A673 (cell line): ENCODE measurements at regions of chr11 and their contacts with region 1.

Region 1: DNA sequence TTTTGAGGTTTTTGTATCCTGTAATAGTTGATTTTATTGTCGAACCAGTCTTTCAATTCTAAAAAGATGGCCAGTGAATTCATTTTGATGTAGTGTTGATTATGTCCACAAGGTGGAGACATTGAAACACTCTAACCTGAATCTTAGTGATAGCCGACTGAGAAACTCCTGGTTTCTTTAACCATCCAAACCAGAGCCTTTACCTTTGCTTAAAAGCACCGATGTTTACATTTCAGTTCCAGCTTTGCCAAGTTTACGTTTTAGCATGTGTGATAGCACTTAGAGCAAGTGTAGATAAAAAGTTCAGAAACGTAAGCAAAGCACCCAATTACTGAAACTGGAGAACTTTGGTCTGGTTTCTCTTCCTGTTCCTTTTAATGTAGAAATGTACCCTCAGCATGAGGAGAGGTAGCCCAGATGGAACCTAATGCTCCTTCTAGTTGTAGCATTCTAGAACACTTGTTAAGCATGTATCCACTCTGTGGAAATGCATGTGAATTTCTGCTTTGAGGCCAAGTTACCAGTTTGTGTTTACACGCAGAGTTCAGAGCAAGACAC is 208.6 kb downstream of the DBX1 start:
- DNase-seq: peak; percentile 46
- H3K4me3 ChIP-seq: no peak overlapping the region
- H3K27ac ChIP-seq: no peak overlapping the region
- H3K4me1 ChIP-seq: no peaks in the 10 kb centered on the region
- H3K27me3 ChIP-seq: peaks cover 21% of the 10 kb centered on the region
- CTCF ChIP-seq: peak; percentile 62

Region 2: DNA sequence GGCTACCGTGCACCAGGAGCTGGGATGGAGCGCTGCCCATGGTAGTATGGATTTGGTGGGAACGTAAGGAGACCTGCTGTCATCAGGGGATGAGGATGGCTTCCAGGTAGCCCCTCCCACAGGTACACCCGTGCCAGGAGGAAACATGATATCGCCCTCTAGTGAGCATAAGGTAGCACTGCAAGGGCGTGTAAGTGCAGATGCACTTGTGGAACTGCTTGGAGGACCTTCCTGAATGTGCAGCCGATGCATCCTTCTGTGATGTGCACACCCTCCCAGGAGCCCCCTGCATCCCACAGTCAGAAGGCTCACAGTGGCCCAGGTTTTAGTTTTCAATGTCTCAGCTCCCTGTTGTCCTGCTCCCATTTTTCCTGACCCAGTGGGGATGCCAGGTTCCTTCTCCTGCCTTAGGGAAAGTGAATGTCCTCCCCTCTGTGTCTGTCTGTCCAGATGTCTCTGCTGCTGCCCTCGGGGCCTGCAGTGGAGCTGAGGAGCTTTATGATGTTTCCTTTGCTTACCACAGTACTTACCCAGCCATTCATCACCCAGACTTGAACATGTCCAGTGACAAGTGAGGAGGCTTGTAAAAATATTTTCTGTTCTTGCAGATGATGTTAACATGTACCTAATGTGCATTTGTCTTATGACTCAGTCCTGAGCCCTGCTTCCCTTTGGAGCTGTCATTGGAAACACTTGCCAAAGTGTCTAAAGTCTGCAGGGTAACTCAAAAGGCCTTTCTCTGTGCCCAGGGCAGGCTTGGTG is 159.5 kb after region 1 on chr11:
- CTCF ChIA-PET with region 1: no interaction called
- POLR2A ChIA-PET with region 1: no interaction called
- intact Hi-C with region 1: loop called (anchors 5 kb)
- DNase-seq: peak; percentile 36
- H3K4me3 ChIP-seq: no peak overlapping the region
- H3K27ac ChIP-seq: no peak overlapping the region
- H3K4me1 ChIP-seq: no peaks in the 10 kb centered on the region
- H3K27me3 ChIP-seq: no peaks in the 10 kb centered on the region
- CTCF ChIP-seq: peak; percentile 78

Region 3: DNA sequence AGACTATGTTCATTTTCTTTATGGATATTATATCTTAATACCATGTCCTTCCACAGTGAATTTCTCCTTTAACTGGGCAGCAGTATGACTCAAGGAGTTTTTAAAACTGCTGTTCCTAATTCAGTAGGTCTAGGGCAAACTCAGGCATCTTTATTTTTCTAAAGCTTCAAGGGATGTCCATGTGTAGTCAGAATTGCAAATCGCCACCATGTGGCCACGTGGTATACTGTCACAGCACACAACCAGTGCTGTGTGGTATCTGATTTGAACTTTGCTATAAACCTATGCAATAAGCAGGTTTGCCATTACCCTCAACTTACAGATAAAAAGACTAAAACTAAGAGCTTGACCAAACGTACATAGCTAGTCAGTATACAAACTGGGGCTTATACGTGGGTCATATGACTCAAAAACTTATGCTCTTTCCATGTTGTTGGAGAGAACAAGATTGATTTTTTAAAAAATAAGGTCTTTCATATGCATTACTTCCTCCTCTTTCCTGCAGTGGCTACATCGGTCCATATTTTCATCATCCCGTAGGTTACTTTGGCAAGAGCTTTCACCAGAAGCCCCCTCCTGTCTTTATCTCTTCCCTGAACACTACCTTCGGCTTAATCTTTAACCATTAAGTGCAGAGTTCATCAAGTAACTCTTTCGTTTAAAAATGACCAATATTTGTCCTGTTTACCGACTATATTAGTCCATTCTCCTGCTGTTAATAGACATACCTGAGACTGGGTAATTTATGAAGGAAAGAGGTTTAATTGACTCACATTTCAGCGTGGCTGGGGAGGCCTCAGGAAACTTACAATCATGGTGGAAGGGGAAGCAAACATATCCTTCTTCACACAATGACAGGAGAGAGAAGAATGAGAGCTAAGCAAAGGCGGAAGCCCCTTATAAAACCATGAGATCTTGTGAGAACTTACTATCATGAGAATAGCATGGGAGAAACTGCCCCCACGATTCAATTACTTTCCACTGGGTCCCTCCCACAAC is 403.9 kb after region 1 on chr11:
- CTCF ChIA-PET with region 1: no interaction called
- POLR2A ChIA-PET with region 1: no interaction called
- intact Hi-C with region 1: loop called (anchors 5 kb)
- DNase-seq: peak; percentile 59
- H3K4me3 ChIP-seq: no peak overlapping the region
- H3K27ac ChIP-seq: no peak overlapping the region
- H3K4me1 ChIP-seq: no peaks in the 10 kb centered on the region
- H3K27me3 ChIP-seq: no peaks in the 10 kb centered on the region
- CTCF ChIP-seq: peak; percentile 68